Activated naive CD4-positive, alpha-beta T cell treated with anti-CD3 and anti-CD28 coated beads for 36 hours (primary cell): ENCODE measurements at regions of chr17 and their contacts with region 1.

Region 1: GRCh38 chr17:1122533-1123392 is 57.0 kb downstream of the ABR start:
- DNase-seq: peak; percentile 93
- H3K4me3 Mint-ChIP-seq: no peak overlapping the region
- H3K27ac Mint-ChIP-seq: no peak overlapping the region
- H3K4me1 Mint-ChIP-seq: peaks cover 5% of the 10 kb centered on the region
- H3K27me3 Mint-ChIP-seq: no peaks in the 10 kb centered on the region

Region 2: DNA sequence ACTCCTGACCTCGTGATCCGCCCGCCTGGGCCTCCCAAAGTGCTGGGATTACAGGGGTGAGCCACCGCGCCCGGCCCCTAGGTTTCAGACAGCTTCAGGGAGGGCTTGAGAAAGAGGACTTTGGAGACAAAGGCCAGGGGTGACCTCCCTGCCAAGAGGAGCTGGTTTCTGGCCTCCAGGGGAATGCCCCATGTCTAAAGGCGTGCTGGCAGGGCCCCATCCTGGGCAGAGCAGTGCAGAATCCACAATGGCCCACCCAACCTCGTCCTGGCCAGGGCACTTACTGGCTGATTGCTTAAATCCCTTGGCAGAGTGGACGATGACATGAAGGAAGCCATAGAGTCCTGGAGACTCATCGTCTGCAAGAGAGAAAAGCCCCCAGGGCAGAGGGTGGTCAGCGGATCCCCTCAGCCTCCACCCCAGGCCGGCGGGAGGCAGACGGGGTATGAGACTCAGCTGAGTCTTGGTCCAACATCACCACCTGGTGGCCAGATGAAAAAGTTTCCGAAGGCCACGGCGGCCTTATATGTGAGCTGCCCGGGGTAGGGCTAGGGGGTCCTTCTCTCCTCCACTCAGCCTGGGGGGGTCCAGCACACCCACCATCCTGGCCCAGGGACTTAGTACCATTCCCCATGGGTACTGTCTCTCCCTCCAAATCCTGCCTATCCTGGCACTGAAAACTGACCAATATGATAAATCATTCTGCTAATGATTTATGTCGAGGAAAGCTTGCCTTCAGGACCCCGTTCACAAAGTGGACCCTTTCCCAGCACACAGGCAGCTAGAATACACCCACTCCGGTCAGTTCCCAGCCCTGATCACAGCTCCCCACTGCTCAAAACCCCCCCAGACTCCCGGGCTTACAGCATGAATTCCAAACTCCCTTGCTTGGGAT is 66.8 kb before region 1 on chr17:
- CTCF ChIA-PET with region 1: interaction called, 7 read pairs
- intact Hi-C with region 1: loop called (anchors 2 kb)
- DNase-seq: peak; percentile 64
- H3K4me3 Mint-ChIP-seq: no peak overlapping the region
- H3K27ac Mint-ChIP-seq: no peak overlapping the region
- H3K4me1 Mint-ChIP-seq: no peaks in the 10 kb centered on the region
- H3K27me3 Mint-ChIP-seq: no peaks in the 10 kb centered on the region

Region 3: GRCh38 chr17:1108861-1109605 is 13.7 kb before region 1 on chr17:
- CTCF ChIA-PET with region 1: interaction called, 10 read pairs
- intact Hi-C with region 1: no loop called
- DNase-seq: peak; percentile 71
- H3K4me3 Mint-ChIP-seq: peak overlapping the region; percentile 83
- H3K27ac Mint-ChIP-seq: peak overlapping the region; percentile 77
- H3K4me1 Mint-ChIP-seq: peaks cover 38% of the 10 kb centered on the region
- H3K27me3 Mint-ChIP-seq: no peaks in the 10 kb centered on the region

Region 4: DNA sequence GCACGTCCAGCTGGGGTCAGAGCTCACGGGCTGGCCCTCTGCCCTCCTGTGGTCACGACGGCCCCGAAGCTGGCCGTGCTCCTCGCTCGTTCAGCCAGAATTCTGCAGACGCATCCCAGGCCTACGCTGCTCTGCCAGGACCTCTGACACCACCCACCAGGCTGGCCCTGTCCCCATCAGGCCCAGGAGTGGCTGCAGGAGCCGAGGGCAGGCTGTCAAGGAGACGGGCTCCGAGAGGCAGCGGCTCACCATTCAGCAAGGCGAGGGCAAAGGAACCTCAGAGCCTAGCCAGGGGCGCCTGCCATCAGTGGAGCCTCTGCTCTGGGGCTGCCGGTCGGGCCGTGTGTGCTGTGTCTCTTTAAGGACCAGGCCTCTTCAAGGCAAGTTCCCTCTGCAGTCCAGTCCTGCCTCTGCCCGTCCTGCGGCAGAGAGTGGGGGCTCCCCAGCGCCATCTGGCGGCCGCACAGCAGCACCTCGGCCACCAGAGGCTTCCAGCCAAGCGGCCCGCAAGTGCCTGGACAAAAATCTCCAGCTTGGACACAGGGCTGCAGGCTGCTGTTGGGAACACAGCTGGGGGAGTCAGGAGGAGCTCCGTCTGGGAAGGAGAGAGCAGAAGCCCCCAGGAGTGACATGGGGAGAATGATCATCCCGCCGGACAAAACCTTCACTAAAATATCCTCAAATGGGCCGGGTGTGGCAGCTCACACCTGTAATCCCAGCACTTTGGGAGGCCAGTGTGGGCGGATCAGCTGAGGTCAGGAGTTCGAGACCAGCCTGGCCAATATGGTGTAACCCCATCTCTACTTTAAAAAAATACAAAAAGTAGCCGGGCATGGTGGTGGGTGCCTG is 64.4 kb after region 1 on chr17:
- CTCF ChIA-PET with region 1: interaction called, 97 read pairs
- intact Hi-C with region 1: loop called (anchors 2 kb)
- DNase-seq: peak; percentile 77
- H3K4me3 Mint-ChIP-seq: no peak overlapping the region
- H3K27ac Mint-ChIP-seq: no peak overlapping the region
- H3K4me1 Mint-ChIP-seq: peaks cover 6% of the 10 kb centered on the region
- H3K27me3 Mint-ChIP-seq: no peaks in the 10 kb centered on the region

Region 5: DNA sequence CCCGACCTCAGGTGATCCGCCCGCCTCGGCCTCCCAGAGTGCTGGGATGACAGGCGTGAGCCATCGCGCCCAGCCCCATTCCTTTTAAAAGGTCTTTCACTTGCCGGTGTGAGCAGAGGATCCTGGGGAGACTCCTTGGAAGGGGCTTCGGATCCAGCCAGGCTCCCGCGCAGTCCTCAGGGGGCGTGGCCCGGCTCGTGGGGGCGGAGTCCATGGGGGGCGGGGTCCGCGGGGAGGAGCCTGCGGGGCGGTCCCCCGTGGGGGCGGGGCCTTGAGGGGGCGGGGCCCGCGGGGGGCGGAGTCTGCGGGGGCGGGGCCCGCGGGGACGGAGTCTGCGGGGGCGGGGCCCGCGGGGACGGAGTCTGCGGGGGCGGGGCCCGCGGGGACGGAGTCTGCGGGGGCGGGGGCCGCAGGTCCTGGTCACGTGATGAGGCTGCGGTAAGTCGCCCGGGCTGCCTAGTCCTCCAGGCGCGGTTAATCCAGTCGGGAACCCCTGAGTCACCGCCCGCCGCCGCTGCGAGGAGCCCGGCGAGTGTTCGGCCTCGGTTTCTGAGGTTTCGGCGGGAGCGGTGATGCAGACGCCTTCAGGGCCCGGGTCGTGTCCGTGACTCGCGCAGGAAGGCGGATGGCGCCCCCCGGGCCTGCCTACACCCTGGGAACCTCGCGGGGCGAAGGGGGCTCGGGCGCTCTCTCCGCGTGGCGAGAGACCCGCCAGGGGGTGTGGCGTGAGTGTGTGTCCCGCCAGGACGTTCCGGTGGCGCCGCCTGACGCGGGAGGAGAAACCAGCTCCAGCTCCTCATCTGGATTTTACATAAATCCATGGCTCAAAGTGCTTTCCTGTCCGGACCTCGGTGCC is 80.6 kb after region 1 on chr17:
- CTCF ChIA-PET with region 1: interaction called, 4 read pairs
- intact Hi-C with region 1: loop called (anchors 5 kb)
- DNase-seq: peak; percentile 56
- H3K4me3 Mint-ChIP-seq: no peak overlapping the region
- H3K27ac Mint-ChIP-seq: no peak overlapping the region
- H3K4me1 Mint-ChIP-seq: peaks cover 21% of the 10 kb centered on the region
- H3K27me3 Mint-ChIP-seq: no peaks in the 10 kb centered on the region

Region 6: DNA sequence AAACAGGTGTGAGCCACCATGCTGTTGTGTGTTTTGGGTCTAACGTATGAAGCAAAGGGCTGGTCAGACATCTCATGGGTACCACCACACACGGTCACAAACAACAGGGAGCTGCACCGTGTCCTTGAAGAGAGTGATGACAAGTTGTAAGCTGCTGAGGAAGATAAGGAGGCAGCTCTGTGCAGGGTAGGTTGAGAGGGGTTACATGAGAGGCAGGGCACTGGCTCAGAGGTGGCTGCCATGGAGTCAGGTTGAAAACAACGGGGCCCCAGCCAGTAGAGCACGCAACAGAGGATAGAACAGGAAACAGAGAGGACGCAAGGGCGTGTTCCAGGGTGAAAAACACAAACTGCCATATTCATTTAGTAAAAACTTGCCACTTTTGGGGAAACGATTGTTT is 208.9 kb after region 1 on chr17:
- CTCF ChIA-PET with region 1: interaction called, 3 read pairs
- intact Hi-C with region 1: loop called (anchors 2 kb)
- DNase-seq: peak; percentile 49
- H3K4me3 Mint-ChIP-seq: no peak overlapping the region
- H3K27ac Mint-ChIP-seq: no peak overlapping the region
- H3K4me1 Mint-ChIP-seq: peaks cover 14% of the 10 kb centered on the region
- H3K27me3 Mint-ChIP-seq: no peaks in the 10 kb centered on the region